ENCODE measurements at regions of chr16 and their contacts with region 1.

Region 1: GRCh38 chr16:46789499-46790414 is 41.2 kb downstream of the C16orf87 start:
- DNase-seq: peak; percentile 81
- ATAC-seq: peak; percentile 98 to 99

Region 2: DNA sequence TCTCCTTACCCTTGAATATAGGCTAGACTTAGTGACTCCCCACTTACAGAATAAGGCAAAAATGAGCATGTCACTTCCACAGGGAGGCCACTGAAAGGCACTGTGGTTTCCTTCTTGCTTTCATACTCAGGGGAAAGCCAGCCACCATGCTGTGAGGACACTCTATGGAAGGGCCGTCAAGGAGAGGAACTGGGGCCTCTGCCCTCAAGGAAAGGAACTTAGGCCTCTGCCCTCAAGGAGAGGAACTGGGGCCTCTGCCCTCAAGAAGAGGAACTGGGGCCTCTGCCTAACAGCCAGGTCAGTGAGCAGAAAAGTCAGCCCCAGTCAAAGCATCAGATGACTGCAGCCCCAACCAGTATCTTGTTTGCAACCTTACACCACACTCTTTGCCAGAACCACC is 130.8 kb before region 1 on chr16:
- intact Hi-C with region 1: no loop called
- DNase-seq: no peak
- ATAC-seq: peak; percentile 59 to 85

Region 3: DNA sequence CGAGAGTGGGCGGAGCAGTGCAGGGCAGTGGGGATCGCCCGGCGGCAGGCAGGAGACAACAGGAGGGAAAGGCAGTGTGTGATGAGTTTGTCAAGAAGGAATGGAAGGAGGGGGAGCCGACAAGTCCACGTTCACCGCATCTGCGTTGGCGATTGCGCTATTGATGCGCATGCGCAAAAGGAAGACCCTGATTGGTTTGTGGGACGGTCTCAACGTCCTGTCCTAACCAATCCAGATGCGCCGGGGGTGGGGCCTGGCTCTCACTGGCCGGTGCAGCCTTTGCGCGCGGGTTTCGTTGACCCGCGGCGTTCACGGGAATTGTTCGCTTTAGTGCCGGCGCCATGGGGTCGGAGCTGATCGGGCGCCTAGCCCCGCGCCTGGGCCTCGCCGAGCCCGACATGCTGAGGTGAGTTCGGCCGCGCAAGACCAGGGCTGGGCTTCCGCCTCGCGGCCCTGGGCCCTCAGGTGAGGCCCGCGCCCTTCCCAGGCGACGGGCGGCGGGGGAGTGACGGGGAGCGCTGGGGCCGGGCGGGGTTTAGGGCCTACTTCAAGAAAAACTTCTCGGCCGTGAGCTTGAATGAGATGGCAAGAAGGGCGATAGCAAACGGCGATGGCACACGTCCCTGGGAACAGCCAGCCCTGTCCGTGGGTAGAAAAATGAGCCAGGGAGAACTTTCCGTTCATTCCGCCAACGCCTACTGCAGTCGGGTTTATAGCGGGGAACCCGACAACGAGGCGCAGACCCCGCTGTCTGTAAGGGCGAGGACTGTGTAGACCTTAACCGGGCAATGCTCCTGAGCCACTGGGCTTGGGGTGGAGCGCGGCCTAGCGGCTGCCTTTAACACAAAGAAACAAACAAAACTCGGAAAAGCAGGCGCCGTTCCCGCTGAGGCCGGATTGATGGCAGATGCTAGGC is 100.1 kb before region 1 on chr16 and contains the start of gene ORC6:
- intact Hi-C with region 1: loop called in 1 of 2 experiments (anchors 10 kb)
- DNase-seq: peak; percentile 99
- ATAC-seq: peak; percentile 91 to 95
- total RNA-seq, gene ORC6: 2.0 to 2.1 TPM

Region 4: GRCh38 chr16:46883690-46884512 is 94.1 kb after region 1 on chr16 and contains the start of gene GPT2:
- intact Hi-C with region 1: no loop called
- DNase-seq: peak; percentile 99
- ATAC-seq: peak; percentile 98 to 99
- total RNA-seq, gene GPT2: 14.0 to 24.5 TPM

Measured in left cardiac atrium (tissue), 4 donors.